Activated CD4-positive, alpha-beta memory T cell treated with anti-CD3 and anti-CD28 coated beads, Interleukin-2, amount 10 ng/mL, durations not matched to agents 7 days and 5 days (primary cell): ENCODE measurements at regions of chr15 and their contacts with region 1.

Region 1: GRCh38 chr15:72473614-72474465 is at the start of gene ARIH1:
- DNase-seq: peak; percentile 95
- H3K4me3 Mint-ChIP-seq: peak within 1 kb of the TSS; percentile 91
- H3K27ac Mint-ChIP-seq: peak within 1 kb of the TSS; percentile 98
- H3K4me1 Mint-ChIP-seq: peaks cover 43% of the 10 kb centered on the region
- H3K27me3 Mint-ChIP-seq: no peaks in the 10 kb centered on the region
- total RNA-seq, gene ARIH1: 133 to 138 TPM

Region 2: DNA sequence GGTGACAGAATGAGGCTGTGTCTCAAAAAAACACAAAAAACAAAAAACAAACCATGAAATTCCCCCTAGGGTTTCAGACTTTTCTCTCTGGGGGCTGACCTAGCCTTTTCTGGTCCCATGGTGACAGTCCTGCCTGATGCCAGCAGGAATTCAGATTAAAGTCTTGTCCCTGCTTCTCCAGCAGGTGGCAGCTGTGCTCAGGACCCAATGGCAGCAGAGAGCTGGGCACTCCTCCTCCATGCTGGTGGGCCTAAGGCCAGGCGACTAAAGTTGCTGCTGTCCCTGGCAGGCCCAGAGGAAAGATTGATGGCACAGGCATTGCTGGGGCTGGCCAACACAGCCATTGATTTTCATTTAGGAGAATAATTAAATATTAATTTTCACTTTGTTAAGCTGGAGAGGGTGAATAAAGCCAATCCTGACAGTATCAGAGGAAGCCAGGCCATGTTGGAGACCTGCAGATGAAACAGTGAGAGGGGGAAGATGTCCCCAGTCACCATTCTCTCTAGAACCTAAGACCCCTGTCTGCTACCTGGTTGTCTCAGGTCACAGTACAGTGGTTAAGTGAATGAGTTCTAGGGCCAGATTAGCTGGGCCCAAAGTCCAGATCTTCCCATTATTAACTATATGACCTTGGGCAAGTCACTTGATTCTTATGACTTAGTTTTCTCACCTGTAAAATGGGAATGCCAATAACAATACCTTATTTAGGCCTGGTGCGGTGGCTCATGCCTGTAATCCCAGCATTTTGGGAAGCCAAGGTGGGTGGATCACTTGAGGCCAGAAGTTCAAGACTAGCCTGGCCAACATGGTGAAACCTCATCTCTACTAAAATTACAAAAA is 161.0 kb before region 1 on chr15:
- CTCF ChIA-PET with region 1: no interaction called
- POLR2A ChIA-PET with region 1: interaction called, 14 read pairs
- DNase-seq: peak; percentile 65
- H3K4me3 Mint-ChIP-seq: no peak overlapping the region
- H3K27ac Mint-ChIP-seq: no peak overlapping the region
- H3K4me1 Mint-ChIP-seq: peaks cover 2% of the 10 kb centered on the region
- H3K27me3 Mint-ChIP-seq: peaks cover 4% of the 10 kb centered on the region

Region 3: GRCh38 chr15:72491768-72492167 is 17.9 kb after region 1 on chr15:
- CTCF ChIA-PET with region 1: interaction called, 11 read pairs
- POLR2A ChIA-PET with region 1: interaction called, 13 read pairs
- DNase-seq: no peak
- H3K4me3 Mint-ChIP-seq: no peak overlapping the region
- H3K27ac Mint-ChIP-seq: no peak overlapping the region
- H3K4me1 Mint-ChIP-seq: peaks cover 16% of the 10 kb centered on the region
- H3K27me3 Mint-ChIP-seq: no peaks in the 10 kb centered on the region